ENCODE measurements at regions of chr9 and their contacts with region 1.

Region 1: DNA sequence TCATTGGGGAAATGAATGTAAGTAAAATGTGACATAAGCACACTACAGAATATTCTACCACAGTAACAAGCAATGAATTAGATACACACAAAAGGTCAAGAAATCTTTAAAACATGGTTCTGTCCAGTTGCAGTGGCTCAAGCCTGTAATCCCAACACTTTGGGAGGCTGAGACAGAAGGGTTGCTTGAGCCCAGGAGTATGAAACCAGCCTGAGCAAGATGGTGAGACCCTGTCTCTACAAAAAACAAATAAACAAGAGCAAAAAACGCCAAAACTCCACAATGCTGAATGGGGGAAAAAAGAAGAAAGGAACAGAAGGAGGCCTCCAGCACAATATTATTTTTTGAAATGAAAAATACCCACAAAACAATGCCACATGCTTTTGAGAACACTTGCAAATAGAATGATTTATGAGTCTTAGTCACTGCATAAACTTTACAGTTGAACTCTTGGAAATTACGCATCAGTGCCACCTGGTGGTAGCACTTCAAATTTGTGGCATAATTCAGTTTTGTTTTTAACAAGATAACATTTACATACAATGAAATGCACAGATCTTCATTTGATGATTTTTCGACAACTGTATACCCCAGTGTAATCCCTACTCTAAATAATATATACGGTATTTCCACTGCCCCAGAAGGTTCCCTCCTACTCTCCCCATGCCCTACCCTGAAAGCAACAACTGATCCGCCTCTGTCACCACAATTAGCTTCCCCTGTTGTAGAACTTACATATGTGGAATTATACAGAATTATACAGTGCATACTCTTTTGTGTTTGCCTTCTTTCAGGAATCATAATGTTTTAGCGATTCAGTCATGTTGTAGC is 14.4 kb upstream of the SPINK4 start:
- DNase-seq: no peak
- ATAC-seq: peak; percentile 50 to 87 (median 76)
- H3K4me3 ChIP-seq: no peak overlapping the region
- H3K27ac ChIP-seq: no peak overlapping the region
- H3K4me1 ChIP-seq: peaks cover 4% of the 10 kb centered on the region
- H3K27me3 ChIP-seq: peaks cover 0 to under 1% (median 0%) of the 10 kb centered on the region in 3 donors
- CTCF ChIP-seq: peak; percentile 88

Region 2: GRCh38 chr9:33167046-33167808 is 58.3 kb before region 1 on chr9 and contains the start of gene B4GALT1:
- intact Hi-C with region 1: loop called in 1 of 2 experiments (anchors 5 kb)
- DNase-seq: peak; percentile 95 to 98
- ATAC-seq: peak; percentile 79 to 85 (median 81)
- H3K4me3 ChIP-seq: peak within 1 kb of the TSS; percentile 96
- H3K27ac ChIP-seq: peak within 1 kb of the TSS; percentile 95
- H3K4me1 ChIP-seq: peaks cover 37% of the 10 kb centered on the region
- H3K27me3 ChIP-seq: no peaks in the 10 kb centered on the region
- CTCF ChIP-seq: no peak
- total RNA-seq, gene B4GALT1: 22.3 to 28.1 (median 24.4) TPM

Region 3: GRCh38 chr9:33177639-33178038 is 47.9 kb before region 1 on chr9:
- intact Hi-C with region 1: loop called (anchors 5 kb)
- DNase-seq: no peak
- ATAC-seq: no peak
- H3K4me3 ChIP-seq: no peak overlapping the region
- H3K27ac ChIP-seq: no peak overlapping the region
- H3K4me1 ChIP-seq: peaks cover 6% of the 10 kb centered on the region
- H3K27me3 ChIP-seq: no peaks in the 10 kb centered on the region
- CTCF ChIP-seq: no peak